ENCODE measurements at regions of chr1 and their contacts with region 1.

Region 1: GRCh38 chr1:162270016-162270770 is 106.5 kb downstream of the SPATA46 start:
- DNase-seq: no peak
- CTCF ChIP-seq: no peak

Region 2: DNA sequence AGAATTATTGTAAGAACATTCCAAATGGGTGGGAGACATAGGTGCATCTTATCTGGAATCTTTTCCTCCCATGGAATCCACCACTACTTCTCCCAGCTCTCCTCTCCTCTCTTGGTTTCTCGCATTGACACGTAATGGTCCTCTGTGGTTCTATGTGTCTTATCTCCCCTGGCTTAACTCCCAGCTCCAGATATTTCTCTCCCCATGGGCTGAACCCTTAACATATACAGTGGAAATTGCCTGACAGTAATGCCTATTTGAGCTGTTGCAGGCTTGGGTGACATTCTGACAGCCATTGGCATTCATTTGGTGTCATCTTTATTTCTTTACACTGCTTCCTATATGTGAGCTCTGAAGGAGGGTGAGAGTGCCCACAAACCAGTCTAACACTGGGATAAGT is 11.8 kb before region 1 on chr1:
- CTCF ChIA-PET with region 1: interaction called, 11 read pairs
- POLR2A ChIA-PET with region 1: no interaction called
- DNase-seq: no peak
- CTCF ChIP-seq: no peak